Activated CD4-positive, alpha-beta T cell treated with anti-CD3 and anti-CD28 coated beads for 36 hours (primary cell): ENCODE measurements at regions of chr19 and their contacts with region 1.

Region 1: GRCh38 chr19:37829526-37829925 is 50.1 kb upstream of the ZNF573 start:
- DNase-seq: no peak
- ATAC-seq: no peak
- H3K4me3 Mint-ChIP-seq: no peak overlapping the region
- H3K27ac Mint-ChIP-seq: no peak overlapping the region
- H3K4me1 Mint-ChIP-seq: no peaks in the 10 kb centered on the region
- H3K27me3 Mint-ChIP-seq: no peaks in the 10 kb centered on the region

Region 2: DNA sequence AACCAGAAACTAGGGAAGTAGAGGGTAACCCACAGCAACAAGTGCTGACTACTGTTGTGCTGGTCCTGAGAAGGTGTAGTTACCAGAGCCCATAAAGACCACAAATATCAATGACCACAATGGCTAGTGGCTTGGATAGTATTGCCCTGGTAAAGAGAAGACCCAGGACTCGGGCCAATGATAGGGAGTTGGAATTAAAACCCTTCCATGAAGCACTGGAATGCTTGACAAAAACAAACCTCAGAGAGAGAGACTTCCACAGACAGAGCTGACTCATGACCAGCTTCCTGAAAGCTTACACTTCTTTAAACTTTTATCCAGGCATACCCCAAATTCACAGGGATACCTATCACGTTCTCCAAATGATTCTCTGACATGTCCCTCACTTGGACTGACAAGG is 16.4 kb after region 1 on chr19:
- CTCF ChIA-PET with region 1: no interaction called
- POLR2A ChIA-PET with region 1: no interaction called
- intact Hi-C with region 1: loop called in 1 of 2 experiments (anchors 2 kb)
- DNase-seq: no peak
- ATAC-seq: no peak
- H3K4me3 Mint-ChIP-seq: no peak overlapping the region
- H3K27ac Mint-ChIP-seq: no peak overlapping the region
- H3K4me1 Mint-ChIP-seq: no peaks in the 10 kb centered on the region
- H3K27me3 Mint-ChIP-seq: no peaks in the 10 kb centered on the region

Region 3: GRCh38 chr19:38213911-38214625 is 384.5 kb after region 1 on chr19:
- CTCF ChIA-PET with region 1: no interaction called
- POLR2A ChIA-PET with region 1: no interaction called
- intact Hi-C with region 1: no loop called
- DNase-seq: peak; percentile 90
- ATAC-seq: peak; percentile 95
- H3K4me3 Mint-ChIP-seq: peak overlapping the region; percentile 67
- H3K27ac Mint-ChIP-seq: peak overlapping the region; percentile 78
- H3K4me1 Mint-ChIP-seq: peaks cover 24% of the 10 kb centered on the region
- H3K27me3 Mint-ChIP-seq: peaks cover 51% of the 10 kb centered on the region